Activated CD4-positive, alpha-beta T cell treated with anti-CD3 and anti-CD28 coated beads for 36 hours (primary cell): ENCODE measurements at regions of chr14 and their contacts with region 1.

Region 1: DNA sequence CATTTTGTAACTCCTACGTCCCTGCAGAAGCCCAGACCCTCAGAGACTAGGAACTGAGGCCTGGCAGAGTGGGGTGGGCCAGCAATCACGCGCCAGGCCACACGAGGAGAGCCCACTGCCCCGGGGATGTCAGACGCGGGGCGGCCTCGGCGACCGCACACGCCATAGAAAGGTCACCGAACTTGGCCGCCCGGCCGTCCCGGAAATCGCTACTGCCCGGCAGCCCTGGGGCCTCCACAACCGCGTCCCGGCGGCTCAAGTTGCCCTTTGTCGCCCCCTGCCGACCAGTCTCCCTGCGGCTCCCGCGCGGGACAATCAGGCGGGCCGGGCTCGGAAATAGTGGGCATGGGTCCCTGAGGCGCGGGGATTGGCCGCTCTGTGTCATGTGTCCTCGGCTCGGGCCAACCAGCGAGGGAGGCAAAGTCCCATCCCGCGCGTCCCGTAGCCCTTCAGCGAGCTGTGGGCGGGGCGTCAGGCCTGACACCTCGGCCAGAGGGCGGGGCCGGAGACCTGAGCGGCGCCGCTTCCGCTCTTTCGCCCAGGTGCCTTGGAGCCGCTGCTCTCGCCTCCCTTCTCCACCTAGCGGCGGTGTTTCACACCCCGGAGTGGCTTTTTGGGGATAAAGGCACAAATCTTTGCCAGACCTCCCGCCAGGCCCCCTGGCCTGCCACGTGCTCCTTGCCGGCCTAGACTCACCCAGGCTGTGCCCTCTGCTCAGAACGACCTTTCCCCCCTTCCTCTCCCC is 33.4 kb upstream of the DEGS2 start:
- DNase-seq: peak; percentile 100
- ATAC-seq: peak; percentile 100
- H3K4me3 Mint-ChIP-seq: peak overlapping the region; percentile 70
- H3K27ac Mint-ChIP-seq: peak overlapping the region; percentile 92
- H3K4me1 Mint-ChIP-seq: peaks cover 13% of the 10 kb centered on the region
- H3K27me3 Mint-ChIP-seq: no peaks in the 10 kb centered on the region

Region 2: DNA sequence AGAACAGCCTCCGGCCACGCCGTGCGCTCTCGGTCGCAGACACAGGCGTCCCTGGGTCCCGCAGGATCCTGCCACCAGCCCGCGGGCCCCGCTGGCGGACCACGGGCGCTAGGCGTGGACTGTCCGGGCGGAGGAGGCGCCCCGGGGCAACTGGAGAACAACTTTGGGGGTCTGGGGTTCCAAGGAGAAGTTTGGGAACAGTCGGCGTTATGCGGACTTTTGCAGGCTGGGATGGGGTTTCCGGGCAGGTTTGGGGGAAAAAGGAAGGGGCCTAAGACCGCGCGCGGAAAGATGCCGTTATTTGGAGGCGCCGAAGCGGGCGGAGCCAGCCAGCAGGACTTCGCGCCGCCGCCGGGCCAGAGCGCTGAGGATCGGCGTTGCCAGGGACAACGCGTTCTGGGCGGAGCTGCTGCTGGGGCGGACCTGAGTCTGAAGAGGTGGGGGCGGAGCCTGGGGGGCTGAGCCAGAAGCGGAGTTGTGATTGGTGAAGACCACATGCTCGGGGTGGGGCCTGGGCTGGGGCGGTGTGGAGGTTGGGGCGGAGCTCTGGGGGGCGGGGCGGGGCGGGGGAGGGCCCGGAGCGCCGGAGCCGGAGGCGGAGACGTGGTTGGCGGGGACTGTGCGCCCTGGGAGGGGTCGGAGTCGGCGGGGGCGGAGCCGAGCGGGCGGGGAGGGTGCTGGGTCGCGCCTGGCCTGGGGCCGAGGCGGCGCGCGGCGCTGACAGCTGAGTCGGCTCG is 509.1 kb before region 1 on chr14 and contains the start of gene CYP46A1:
- CTCF ChIA-PET with region 1: interaction called, 3 read pairs
- POLR2A ChIA-PET with region 1: no interaction called
- intact Hi-C with region 1: loop called in 1 of 2 experiments (anchors 1 kb)
- DNase-seq: peak; percentile 100
- ATAC-seq: peak; percentile 97
- H3K4me3 Mint-ChIP-seq: peak within 1 kb of the TSS; percentile 86
- H3K27ac Mint-ChIP-seq: peak within 1 kb of the TSS; percentile 73
- H3K4me1 Mint-ChIP-seq: peaks cover 10% of the 10 kb centered on the region
- H3K27me3 Mint-ChIP-seq: peaks cover 9% of the 10 kb centered on the region
- total RNA-seq, gene CYP46A1: 0.05 to 0.23 TPM

Region 3: GRCh38 chr14:99982537-99983250 is 210.2 kb before region 1 on chr14:
- CTCF ChIA-PET with region 1: interaction called, 50 read pairs
- POLR2A ChIA-PET with region 1: no interaction called
- intact Hi-C with region 1: loop called (anchors 1 kb)
- DNase-seq: peak; percentile 77
- ATAC-seq: peak; percentile 94
- H3K4me3 Mint-ChIP-seq: no peak overlapping the region
- H3K27ac Mint-ChIP-seq: peak overlapping the region; percentile 9
- H3K4me1 Mint-ChIP-seq: peaks cover 14% of the 10 kb centered on the region
- H3K27me3 Mint-ChIP-seq: no peaks in the 10 kb centered on the region

Region 4: DNA sequence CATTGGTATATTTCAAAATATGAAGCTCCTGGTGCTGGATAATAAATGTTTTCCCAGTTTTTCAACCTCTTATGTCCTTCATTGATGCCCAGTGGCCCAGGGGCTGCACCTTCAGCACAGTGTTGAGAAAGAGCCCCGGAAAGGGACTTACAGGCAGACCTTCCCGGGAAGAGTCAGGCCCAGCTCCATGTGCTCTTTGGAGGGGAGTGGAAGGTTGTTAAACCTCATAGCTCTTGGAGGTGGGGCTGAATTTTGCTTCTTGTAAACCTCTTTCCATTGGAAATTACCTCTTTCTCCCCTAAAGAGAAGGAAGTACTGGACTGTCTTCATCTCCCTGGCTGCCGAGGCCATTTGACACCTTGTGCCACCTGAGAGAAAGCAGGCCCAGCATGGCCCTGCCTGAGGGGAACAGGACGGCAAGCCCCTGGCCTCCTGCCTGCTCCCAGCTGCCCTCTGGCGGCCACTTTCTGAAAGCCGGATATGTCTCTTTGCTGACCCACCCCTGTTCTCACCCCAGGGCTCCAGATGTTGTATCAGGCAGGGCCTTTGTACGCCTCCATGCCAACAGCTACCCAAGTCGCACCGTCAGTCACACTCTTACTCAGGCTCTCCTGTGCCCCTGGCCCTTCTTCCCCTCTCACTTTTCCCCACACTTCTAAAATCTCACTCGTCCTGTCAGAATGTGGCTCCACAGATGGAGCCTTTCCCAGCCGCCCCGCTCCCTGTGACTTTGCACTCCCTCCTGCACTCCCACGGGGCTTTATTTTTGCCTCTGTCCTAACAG is 84.6 kb before region 1 on chr14:
- CTCF ChIA-PET with region 1: interaction called, 7 read pairs
- POLR2A ChIA-PET with region 1: no interaction called
- intact Hi-C with region 1: loop called (anchors 1 to 2 kb)
- DNase-seq: peak; percentile 94
- ATAC-seq: peak; percentile 53
- H3K4me3 Mint-ChIP-seq: no peak overlapping the region
- H3K27ac Mint-ChIP-seq: peak overlapping the region; percentile 92
- H3K4me1 Mint-ChIP-seq: peaks cover 74% of the 10 kb centered on the region
- H3K27me3 Mint-ChIP-seq: no peaks in the 10 kb centered on the region

Region 5: GRCh38 chr14:100155042-100155846 is 37.6 kb before region 1 on chr14:
- CTCF ChIA-PET with region 1: interaction called, 26 read pairs
- POLR2A ChIA-PET with region 1: no interaction called
- intact Hi-C with region 1: loop called in 1 of 2 experiments (anchors 1 kb)
- DNase-seq: peak; percentile 75
- ATAC-seq: no peak
- H3K4me3 Mint-ChIP-seq: no peak overlapping the region
- H3K27ac Mint-ChIP-seq: no peak overlapping the region
- H3K4me1 Mint-ChIP-seq: peaks cover 6% of the 10 kb centered on the region
- H3K27me3 Mint-ChIP-seq: peaks cover 15% of the 10 kb centered on the region

Region 6: GRCh38 chr14:100213956-100214774 is 21.3 kb after region 1 on chr14:
- CTCF ChIA-PET with region 1: interaction called, 18 read pairs
- POLR2A ChIA-PET with region 1: interaction called, 5 read pairs
- intact Hi-C with region 1: loop called (anchors 1 kb)
- DNase-seq: peak; percentile 97
- ATAC-seq: peak; percentile 96
- H3K4me3 Mint-ChIP-seq: peak overlapping the region; percentile 79
- H3K27ac Mint-ChIP-seq: peak overlapping the region; percentile 87
- H3K4me1 Mint-ChIP-seq: peaks cover 23% of the 10 kb centered on the region
- H3K27me3 Mint-ChIP-seq: no peaks in the 10 kb centered on the region

Region 7: GRCh38 chr14:100285021-100285912 is 92.4 kb after region 1 on chr14:
- CTCF ChIA-PET with region 1: interaction called, 3 read pairs
- POLR2A ChIA-PET with region 1: no interaction called
- intact Hi-C with region 1: loop called in 1 of 2 experiments (anchors 1 kb)
- DNase-seq: peak; percentile 88
- ATAC-seq: peak; percentile 89
- H3K4me3 Mint-ChIP-seq: peak overlapping the region; percentile 68
- H3K27ac Mint-ChIP-seq: no peak overlapping the region
- H3K4me1 Mint-ChIP-seq: peaks cover 7% of the 10 kb centered on the region
- H3K27me3 Mint-ChIP-seq: no peaks in the 10 kb centered on the region